ENCODE measurements at regions of chr10 and their contacts with region 1.

Region 1: DNA sequence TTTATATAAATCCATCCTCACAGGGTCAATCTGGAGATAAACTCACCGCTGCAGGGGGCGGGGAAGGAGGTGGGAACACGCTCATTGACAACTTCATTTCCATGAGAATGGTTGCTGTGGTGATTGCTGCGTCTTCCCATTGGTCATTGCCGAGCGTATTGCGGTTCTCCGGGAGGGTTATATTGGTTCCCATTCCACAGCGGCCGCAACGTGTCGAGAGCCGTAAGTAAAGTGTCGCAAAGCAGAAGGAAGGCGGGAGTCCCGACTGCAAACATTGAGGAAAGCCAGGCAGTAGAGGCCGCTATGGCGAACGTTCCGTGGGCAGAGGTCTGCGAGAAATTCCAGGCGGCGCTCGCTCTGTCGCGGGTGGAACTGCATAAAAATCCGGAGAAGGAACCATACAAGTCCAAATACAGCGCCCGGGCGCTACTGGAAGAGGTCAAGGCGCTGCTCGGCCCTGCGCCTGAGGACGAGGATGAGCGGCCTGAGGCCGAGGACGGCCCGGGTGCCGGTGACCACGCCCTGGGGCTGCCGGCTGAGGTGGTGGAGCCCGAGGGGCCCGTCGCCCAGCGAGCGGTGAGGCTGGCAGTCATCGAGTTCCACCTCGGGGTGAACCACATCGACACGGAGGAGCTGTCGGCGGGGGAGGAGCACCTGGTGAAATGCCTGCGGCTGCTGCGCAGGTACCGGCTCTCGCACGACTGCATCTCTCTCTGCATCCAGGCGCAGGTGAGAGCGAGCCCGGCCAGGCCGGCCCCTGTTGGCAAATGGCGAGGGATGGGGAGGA is at the start of gene KIFBP:
- DNase-seq: peak; percentile 91 to 94
- ATAC-seq: peak; percentile 95 to 98 (median 96)
- H3K4me3 ChIP-seq: peak within 1 kb of the TSS; percentile 99
- H3K27ac ChIP-seq: peak within 1 kb of the TSS; percentile 86
- H3K4me1 ChIP-seq: peaks cover 33% of the 10 kb centered on the region
- H3K27me3 ChIP-seq: no peaks in the 10 kb centered on the region
- CTCF ChIP-seq: peak; percentile 40
- total RNA-seq, gene KIFBP: 23.2 to 36.9 (median 32.1) TPM

Region 2: DNA sequence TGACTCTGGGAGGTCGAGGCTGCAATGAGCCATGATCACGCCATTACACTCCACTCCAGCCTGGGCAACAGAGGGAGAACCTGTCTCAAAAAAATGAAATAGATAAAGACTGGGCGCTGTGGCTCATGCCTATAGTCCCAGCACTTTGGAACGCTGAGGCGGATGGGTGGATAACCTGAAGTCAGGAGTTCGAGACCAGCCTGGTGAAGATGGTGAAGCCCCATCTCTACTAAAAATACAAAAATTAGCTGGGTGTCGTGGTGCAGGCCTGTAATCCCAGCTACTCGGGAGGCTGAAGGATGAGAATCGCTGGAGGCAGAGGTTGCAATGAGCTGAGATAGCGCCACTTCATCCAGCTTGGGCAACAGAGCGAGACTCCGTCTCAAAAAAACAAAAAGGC is 33.8 kb before region 1 on chr10:
- intact Hi-C with region 1: loop called in 1 of 2 experiments (anchors 5 kb)
- DNase-seq: no peak
- ATAC-seq: no peak
- H3K4me3 ChIP-seq: peak overlapping the region; percentile 99
- H3K27ac ChIP-seq: no peak overlapping the region
- H3K4me1 ChIP-seq: peaks cover 23% of the 10 kb centered on the region
- H3K27me3 ChIP-seq: no peaks in the 10 kb centered on the region
- CTCF ChIP-seq: no peak

Region 3: DNA sequence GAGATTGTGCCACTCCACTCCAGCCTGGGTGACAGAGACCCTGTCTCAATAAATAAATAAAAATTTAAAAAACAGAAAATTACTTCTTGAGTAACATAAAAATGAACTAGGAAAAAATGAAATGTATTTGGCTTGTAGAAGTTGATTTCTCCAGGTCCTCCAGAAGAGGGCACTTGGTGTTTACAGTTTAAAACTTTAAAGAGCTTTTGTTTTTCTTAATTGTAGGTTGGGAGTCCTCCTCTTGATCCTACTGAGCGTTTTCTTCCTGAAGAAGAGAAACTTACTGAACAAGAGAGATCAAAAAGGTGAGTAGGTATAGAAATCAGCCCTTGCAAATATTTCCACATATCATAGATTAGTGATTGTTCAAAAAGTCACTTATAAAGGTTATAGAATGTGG is 16.1 kb after region 1 on chr10:
- intact Hi-C with region 1: no loop called
- DNase-seq: no peak
- ATAC-seq: peak in 1 of 4 donors; percentile 58
- H3K4me3 ChIP-seq: no peak overlapping the region
- H3K27ac ChIP-seq: no peak overlapping the region
- H3K4me1 ChIP-seq: no peaks in the 10 kb centered on the region
- H3K27me3 ChIP-seq: no peaks in the 10 kb centered on the region
- CTCF ChIP-seq: peak; percentile 50

Region 4: DNA sequence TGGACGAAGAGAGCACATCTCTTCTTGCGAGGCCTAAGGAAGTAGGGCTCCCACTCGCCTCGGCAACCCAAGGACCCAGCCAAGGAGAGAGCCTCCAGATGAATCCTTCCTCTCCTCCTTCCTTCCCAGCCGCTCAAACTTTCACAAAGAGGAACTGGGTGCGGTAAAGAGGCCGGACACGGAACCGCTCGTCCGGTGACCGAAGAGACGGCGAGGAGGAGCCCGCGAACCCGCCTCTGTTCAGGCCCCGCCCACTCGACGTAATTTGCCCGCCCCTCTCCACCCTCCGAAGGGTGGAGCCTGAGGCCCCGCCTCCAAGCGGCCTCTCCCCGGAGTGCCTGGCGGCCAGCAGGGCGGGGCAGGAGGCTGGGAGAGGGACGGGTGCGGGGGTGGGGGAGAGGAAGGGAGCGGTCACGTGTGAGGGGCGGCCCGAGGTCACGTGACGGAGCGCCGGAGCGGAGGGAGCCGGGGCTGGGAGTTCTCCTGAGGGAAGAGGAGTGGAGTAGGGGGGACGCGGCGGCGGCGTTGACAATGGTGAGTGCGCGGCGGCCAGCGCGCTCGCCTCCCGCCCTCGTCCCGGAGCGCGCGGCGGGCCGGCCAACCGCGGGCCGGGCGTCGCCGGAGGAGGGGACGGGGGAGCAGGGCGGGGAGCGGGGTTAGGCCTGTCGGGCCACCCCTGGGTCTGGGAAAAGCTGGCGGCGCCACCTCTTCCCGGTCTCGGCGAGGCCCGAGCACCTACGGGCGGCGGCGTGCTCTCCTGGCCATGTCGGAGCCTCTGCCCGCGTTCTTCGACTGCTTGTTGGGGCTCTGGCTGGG is 135.2 kb after region 1 on chr10 and contains the start of gene VPS26A:
- intact Hi-C with region 1: loop called in 1 of 2 experiments (anchors 10 kb)
- DNase-seq: peak; percentile 99 to 100
- ATAC-seq: peak; percentile 97 to 100 (median 98)
- H3K4me3 ChIP-seq: peak within 1 kb of the TSS; percentile 93
- H3K27ac ChIP-seq: peak within 1 kb of the TSS; percentile 98
- H3K4me1 ChIP-seq: peaks cover 15% of the 10 kb centered on the region
- H3K27me3 ChIP-seq: no peaks in the 10 kb centered on the region
- CTCF ChIP-seq: no peak
- total RNA-seq, gene VPS26A: 25.2 to 41.1 (median 39.2) TPM